AG04450 (cell line): ENCODE measurements at regions of chr1 and their contacts with region 1.

Region 1: DNA sequence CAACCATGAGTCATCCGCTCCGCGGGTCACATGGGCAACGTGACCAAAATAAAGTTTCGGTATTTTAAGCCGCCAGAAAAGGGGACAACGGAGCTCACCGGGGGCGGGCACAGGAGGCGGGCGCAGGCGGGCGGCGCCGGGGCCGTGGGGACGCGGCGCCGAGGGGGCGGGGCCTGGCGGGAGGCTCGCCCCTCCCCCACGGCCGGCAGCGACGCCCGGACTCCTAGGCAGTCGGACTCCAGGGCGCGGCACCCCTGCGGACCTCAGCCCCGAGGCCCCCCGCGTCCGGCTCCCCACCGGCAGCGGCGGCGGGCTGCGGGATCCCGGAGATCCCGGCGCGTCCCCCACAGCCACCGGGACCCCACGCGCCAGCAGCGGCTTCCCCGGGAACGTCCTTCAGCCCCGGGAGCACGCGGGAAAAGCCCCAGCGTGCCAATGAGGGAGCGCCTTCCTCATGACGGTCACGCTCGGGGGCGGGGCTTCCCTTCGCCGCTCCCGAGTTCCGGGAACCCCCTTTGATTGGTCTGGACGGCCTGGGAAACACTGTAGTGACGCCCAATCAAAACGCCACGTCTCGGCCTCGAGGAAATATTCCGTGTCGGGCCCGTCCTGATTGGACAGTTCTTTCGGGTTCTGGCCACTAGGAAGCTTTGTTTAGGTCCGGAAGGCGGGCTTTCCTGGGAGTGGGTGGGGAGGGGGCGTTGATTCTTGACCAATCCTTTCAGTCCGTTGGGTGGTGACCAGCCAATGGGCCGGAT is 515 bp upstream of the CAMTA1 start:
- DNase-seq: peak; percentile 100
- H3K4me3 ChIP-seq: peak overlapping the region; percentile 69
- H3K27ac ChIP-seq: peak overlapping the region; percentile 85
- H3K27me3 ChIP-seq: no peaks in the 10 kb centered on the region
- CTCF ChIP-seq: no peak

Region 2: DNA sequence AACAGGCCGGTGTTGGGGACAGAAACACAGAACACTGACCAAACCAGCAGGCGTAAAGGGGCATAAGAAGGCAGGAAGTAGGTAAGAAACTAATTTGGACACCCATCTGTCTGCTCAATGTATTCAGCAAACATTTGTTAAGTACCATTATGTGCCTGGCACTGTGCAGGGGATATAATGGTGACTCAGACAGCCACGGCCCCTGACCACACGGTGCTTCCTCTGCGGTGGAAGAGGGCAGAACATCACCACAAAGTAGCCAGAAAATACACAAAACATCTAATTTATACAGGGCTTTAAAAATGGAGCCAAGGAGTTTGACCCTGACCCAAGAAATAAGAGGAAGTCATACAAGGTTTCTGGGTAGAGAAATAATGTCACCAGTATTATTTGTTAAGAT is 96.0 kb before region 1 on chr1:
- CTCF ChIA-PET with region 1: no interaction called
- POLR2A ChIA-PET with region 1: no interaction called
- DNase-seq: no peak
- H3K4me3 ChIP-seq: no peak overlapping the region
- H3K27ac ChIP-seq: no peak overlapping the region
- H3K27me3 ChIP-seq: no peaks in the 10 kb centered on the region
- CTCF ChIP-seq: no peak

Region 3: GRCh38 chr1:6801966-6802365 is 17.2 kb after region 1 on chr1:
- CTCF ChIA-PET with region 1: no interaction called
- POLR2A ChIA-PET with region 1: interaction called, 14 read pairs
- DNase-seq: no peak
- H3K4me3 ChIP-seq: no peak overlapping the region
- H3K27ac ChIP-seq: peak overlapping the region; percentile 43
- H3K27me3 ChIP-seq: no peaks in the 10 kb centered on the region
- CTCF ChIP-seq: no peak